MCF 10A (cell line): ENCODE measurements at regions of chr5 and their contacts with region 1.

Region 1: GRCh38 chr5:142888469-142889085 is 118.4 kb downstream of the ARHGAP26 start:
- DNase-seq: peak; percentile 83
- H3K4me3 Mint-ChIP-seq: no peak overlapping the region
- H3K27ac Mint-ChIP-seq: no peak overlapping the region
- H3K4me1 Mint-ChIP-seq: no peaks in the 10 kb centered on the region
- H3K27me3 Mint-ChIP-seq: no peaks in the 10 kb centered on the region
- CTCF ChIP-seq: peak; percentile 89

Region 2: GRCh38 chr5:142699184-142699720 is 189.3 kb before region 1 on chr5:
- CTCF ChIA-PET with region 1: interaction called, 1,942 read pairs
- POLR2A ChIA-PET with region 1: no interaction called
- intact Hi-C with region 1: no loop called
- DNase-seq: peak; percentile 93
- H3K4me3 Mint-ChIP-seq: no peak overlapping the region
- H3K27ac Mint-ChIP-seq: no peak overlapping the region
- H3K4me1 Mint-ChIP-seq: peaks cover 14% of the 10 kb centered on the region
- H3K27me3 Mint-ChIP-seq: no peaks in the 10 kb centered on the region
- CTCF ChIP-seq: peak; percentile 100

Region 3: GRCh38 chr5:142874537-142874936 is 14.0 kb before region 1 on chr5:
- CTCF ChIA-PET with region 1: interaction called, 131 read pairs
- POLR2A ChIA-PET with region 1: interaction called, 9 read pairs
- intact Hi-C with region 1: no loop called
- DNase-seq: peak; percentile 99
- H3K4me3 Mint-ChIP-seq: no peak overlapping the region
- H3K27ac Mint-ChIP-seq: peak overlapping the region; percentile 32
- H3K4me1 Mint-ChIP-seq: peaks cover 73% of the 10 kb centered on the region
- H3K27me3 Mint-ChIP-seq: no peaks in the 10 kb centered on the region
- CTCF ChIP-seq: no peak

Region 4: DNA sequence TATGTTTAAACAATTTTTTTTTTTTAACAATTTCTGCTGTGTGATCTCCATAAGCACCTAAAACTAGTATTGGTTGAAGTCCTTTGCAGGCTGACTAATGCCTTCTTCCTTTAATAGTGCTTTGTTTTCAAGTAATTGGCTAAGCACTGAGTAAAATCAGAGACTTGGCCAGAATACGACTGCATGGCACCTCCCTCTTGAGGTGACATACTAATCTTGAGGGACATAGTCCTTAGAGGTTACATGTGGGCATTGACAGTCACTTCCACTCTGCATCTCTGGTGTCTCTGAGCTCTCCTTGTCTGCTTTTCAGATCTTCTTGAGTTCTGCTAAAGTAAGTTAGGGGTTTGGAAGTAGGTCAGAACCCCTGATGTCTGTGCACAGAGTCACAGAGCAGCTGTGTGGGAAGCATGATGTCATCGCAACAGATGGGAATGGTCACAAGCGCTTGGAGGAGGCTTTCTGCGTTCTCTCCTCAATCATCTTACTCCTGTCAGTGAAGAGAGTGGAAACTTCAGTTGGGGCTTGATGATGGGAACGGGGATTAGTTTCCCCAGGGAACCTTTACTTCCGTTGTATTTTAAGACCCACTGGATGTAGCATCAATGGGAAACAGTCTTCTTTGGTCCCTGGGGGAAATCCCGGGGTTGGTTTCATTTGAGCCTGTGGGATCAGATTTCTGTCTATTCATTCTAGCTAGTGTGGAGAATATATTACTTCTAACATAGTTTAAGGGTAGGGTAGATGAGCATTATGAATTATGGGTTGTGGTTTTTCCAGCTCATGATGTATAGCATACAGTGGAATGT is 18.5 kb after region 1 on chr5:
- CTCF ChIA-PET with region 1: interaction called, 122 read pairs
- POLR2A ChIA-PET with region 1: interaction called, 3 read pairs
- intact Hi-C with region 1: no loop called
- DNase-seq: no peak
- H3K4me3 Mint-ChIP-seq: no peak overlapping the region
- H3K27ac Mint-ChIP-seq: no peak overlapping the region
- H3K4me1 Mint-ChIP-seq: peaks cover 8% of the 10 kb centered on the region
- H3K27me3 Mint-ChIP-seq: no peaks in the 10 kb centered on the region
- CTCF ChIP-seq: no peak

Region 5: GRCh38 chr5:142938266-142938880 is 49.8 kb after region 1 on chr5:
- CTCF ChIA-PET with region 1: interaction called, 12 read pairs
- POLR2A ChIA-PET with region 1: no interaction called
- intact Hi-C with region 1: no loop called
- DNase-seq: no peak
- H3K4me3 Mint-ChIP-seq: no peak overlapping the region
- H3K27ac Mint-ChIP-seq: no peak overlapping the region
- H3K4me1 Mint-ChIP-seq: no peaks in the 10 kb centered on the region
- H3K27me3 Mint-ChIP-seq: no peaks in the 10 kb centered on the region
- CTCF ChIP-seq: no peak

Region 6: GRCh38 chr5:144583541-144584449 is 1695.2 kb after region 1 on chr5:
- CTCF ChIA-PET with region 1: no interaction called
- POLR2A ChIA-PET with region 1: no interaction called
- intact Hi-C with region 1: no loop called
- DNase-seq: no peak
- H3K4me3 Mint-ChIP-seq: no peak overlapping the region
- H3K27ac Mint-ChIP-seq: no peak overlapping the region
- H3K4me1 Mint-ChIP-seq: peaks cover 10% of the 10 kb centered on the region
- H3K27me3 Mint-ChIP-seq: no peaks in the 10 kb centered on the region
- CTCF ChIP-seq: no peak